Breast epithelium (tissue), 4 donors: ENCODE measurements at regions of chr22 and their contacts with region 1.

Region 1: DNA sequence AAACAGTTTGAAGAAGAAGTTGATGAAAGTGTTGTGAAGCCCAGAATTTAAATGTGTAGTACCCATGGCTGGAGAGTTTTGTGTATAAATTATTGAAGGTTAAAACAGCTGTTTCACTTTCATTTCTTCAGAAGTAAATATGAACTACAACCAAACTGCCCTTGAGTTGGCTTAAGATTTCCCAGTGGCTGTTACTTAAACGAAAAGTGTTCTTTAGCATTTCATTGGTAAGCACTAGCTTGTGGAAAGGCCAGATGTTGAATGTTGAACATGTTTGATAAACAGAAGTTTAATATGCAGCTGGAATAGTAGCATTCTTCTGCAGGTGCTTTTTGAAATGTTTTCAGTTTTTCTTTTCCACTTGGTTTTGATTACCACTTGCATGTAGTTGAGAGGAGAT is 83.2 kb upstream of the TNRC6B start:
- DNase-seq: no peak
- H3K4me3 ChIP-seq: no peak overlapping the region
- H3K27ac ChIP-seq: no peak overlapping the region
- H3K4me1 ChIP-seq: no peaks in the 10 kb centered on the region
- H3K27me3 ChIP-seq: no peaks in the 10 kb centered on the region
- CTCF ChIP-seq: no peak
- POLR2A ChIP-seq: no peak

Region 2: GRCh38 chr22:39908737-39909136 is 185.7 kb before region 1 on chr22:
- intact Hi-C with region 1: no loop called
- DNase-seq: no peak
- H3K4me3 ChIP-seq: no peak overlapping the region
- H3K27ac ChIP-seq: no peak overlapping the region
- H3K4me1 ChIP-seq: no peaks in the 10 kb centered on the region
- H3K27me3 ChIP-seq: no peaks in the 10 kb centered on the region
- CTCF ChIP-seq: no peak
- POLR2A ChIP-seq: no peak

Region 3: DNA sequence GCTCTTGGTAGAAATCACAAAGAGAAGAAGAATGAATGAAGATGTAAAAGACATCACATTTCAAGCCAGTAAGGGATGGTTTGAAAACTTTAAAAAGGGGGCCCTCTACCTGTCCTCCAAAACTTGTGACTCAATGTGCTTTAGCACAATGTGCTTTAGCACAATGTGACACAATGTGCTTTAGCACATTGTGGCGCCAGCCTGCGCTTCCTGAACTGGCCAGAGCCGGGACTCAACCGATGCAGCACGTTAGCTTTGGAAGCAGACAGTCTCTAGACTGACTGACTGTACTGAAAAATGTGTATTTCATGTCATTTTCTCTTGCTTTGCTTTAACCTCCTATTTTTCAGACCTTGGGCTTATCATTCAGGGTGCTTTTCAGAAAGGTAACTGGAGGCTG is 36.2 kb before region 1 on chr22:
- intact Hi-C with region 1: loop called (anchors 2 kb)
- DNase-seq: no peak
- H3K4me3 ChIP-seq: no peak overlapping the region
- H3K27ac ChIP-seq: no peak overlapping the region
- H3K4me1 ChIP-seq: no peaks in the 10 kb centered on the region
- H3K27me3 ChIP-seq: no peaks in the 10 kb centered on the region
- CTCF ChIP-seq: no peak
- POLR2A ChIP-seq: no peak

Region 4: GRCh38 chr22:40076702-40077645 is 17.5 kb before region 1 on chr22:
- intact Hi-C with region 1: no loop called
- DNase-seq: no peak
- H3K4me3 ChIP-seq: no peak overlapping the region
- H3K27ac ChIP-seq: no peak overlapping the region
- H3K4me1 ChIP-seq: peaks cover 0 to 4% of the 10 kb centered on the region in 2 donors
- H3K27me3 ChIP-seq: no peaks in the 10 kb centered on the region
- CTCF ChIP-seq: no peak
- POLR2A ChIP-seq: no peak